Endothelial cell of umbilical vein (primary cell): ENCODE measurements at regions of chr12 and their contacts with region 1.

Region 1: DNA sequence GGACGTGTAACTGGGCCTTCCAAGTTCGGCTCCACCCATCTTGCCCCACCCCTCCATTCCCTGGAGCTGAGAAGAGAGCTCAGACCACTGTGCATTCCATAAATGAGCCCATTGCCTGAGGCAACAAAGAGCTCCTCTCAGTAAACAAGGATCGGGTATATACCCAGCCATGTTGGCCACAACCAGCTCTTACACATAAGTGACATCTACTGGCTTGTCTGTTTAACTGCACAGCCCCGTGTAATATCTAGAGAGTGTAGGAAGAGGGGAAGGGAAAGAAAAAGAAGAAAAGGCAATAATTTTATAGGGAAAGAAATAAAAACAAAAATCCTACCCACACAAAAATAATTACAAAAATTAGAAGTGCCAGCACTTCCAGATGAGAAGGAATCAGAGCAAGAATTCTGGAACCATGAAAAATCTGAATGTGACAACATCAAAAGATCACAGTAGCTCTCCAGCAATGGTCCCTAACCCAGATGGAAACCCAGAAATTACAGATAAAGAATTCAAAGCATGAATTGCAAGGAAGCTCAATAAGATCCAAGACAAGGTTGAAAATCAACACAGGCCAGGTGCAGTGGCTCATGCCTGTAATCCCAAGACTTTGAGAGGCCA is 308.1 kb downstream of the RPAP3 start:
- DNase-seq: peak; percentile 55
- H3K4me3 ChIP-seq: no peak overlapping the region
- H3K27ac ChIP-seq: no peak overlapping the region
- H3K4me1 ChIP-seq: peaks cover 12% of the 10 kb centered on the region
- H3K27me3 ChIP-seq: no peaks in the 10 kb centered on the region
- CTCF ChIP-seq: peak; percentile 58 to 59
- POLR2A ChIP-seq: no peak

Region 2: DNA sequence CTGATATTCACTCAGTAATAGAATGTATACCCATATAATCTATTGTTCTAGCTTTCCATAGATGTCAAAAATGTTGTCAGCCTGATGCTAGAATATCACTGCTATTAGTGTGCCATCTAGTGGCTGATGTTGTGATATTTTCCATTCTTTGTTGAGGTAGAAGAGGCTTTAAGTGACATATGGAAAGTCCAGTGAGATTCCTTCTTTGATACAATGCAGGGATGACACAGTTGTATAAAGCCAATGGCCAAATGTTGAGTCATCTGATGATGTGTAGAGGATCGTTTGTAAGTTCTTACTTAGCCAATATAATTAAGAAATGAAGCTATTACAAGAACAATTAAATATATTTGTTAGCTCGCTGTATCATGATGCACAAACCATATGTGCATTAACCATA is 376.5 kb before region 1 on chr12:
- CTCF ChIA-PET with region 1: interaction called, 45 read pairs
- POLR2A ChIA-PET with region 1: interaction called, 3 read pairs
- dilution Hi-C with region 1: no loop called
- intact Hi-C with region 1: no loop called
- DNase-seq: peak; percentile 91
- H3K4me3 ChIP-seq: no peak overlapping the region
- H3K27ac ChIP-seq: no peak overlapping the region
- H3K4me1 ChIP-seq: peaks cover 20% of the 10 kb centered on the region
- H3K27me3 ChIP-seq: no peaks in the 10 kb centered on the region
- CTCF ChIP-seq: peak; percentile 32 to 38
- POLR2A ChIP-seq: no peak

Region 3: GRCh38 chr12:47079468-47079980 is 318.2 kb before region 1 on chr12 and contains the starts of genes AMIGO2 and PCED1B:
- CTCF ChIA-PET with region 1: interaction called, 90 read pairs
- POLR2A ChIA-PET with region 1: no interaction called
- dilution Hi-C with region 1: no loop called
- intact Hi-C with region 1: loop called (anchors 1 kb)
- DNase-seq: peak; percentile 67
- H3K4me3 ChIP-seq: peak within 1 kb of the TSS; percentile 65 to 91 (median 78)
- H3K27ac ChIP-seq: peak within 1 kb of the TSS; percentile 97
- H3K4me1 ChIP-seq: peaks cover 13% of the 10 kb centered on the region
- H3K27me3 ChIP-seq: no peaks in the 10 kb centered on the region
- CTCF ChIP-seq: peak in 1 of 2 donors; percentile 18
- POLR2A ChIP-seq: no peak
- total RNA-seq, gene AMIGO2: 7.5 and 8.7 TPM in 2 replicates
- total RNA-seq, gene PCED1B: 1.5 and 2.6 TPM in 2 replicates

Region 4: DNA sequence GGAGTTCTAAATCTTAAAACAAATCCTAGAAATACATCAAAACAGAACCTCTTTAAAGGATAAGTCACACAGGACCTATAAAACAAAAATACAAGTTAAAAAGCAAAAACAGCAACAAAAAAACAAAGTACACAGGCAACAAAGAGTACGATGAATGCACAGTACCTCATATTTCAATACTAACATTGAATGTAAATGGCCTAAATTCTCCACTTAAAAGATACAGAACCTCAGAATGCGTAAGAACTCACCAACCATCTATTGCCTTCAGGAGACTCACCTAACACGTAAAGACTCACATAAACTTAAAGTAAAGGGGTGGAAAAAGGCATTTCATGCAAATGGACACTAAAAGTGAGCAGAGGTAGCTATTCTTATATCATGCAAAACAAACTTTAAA is 145.9 kb before region 1 on chr12:
- CTCF ChIA-PET with region 1: interaction called, 10 read pairs
- POLR2A ChIA-PET with region 1: no interaction called
- dilution Hi-C with region 1: no loop called
- intact Hi-C with region 1: no loop called
- DNase-seq: no peak
- H3K4me3 ChIP-seq: no peak overlapping the region
- H3K27ac ChIP-seq: no peak overlapping the region
- H3K4me1 ChIP-seq: peaks cover 7% of the 10 kb centered on the region
- H3K27me3 ChIP-seq: peaks cover 0 to 1% of the 10 kb centered on the region in 2 experiments
- CTCF ChIP-seq: no peak
- POLR2A ChIP-seq: no peak

Region 5: DNA sequence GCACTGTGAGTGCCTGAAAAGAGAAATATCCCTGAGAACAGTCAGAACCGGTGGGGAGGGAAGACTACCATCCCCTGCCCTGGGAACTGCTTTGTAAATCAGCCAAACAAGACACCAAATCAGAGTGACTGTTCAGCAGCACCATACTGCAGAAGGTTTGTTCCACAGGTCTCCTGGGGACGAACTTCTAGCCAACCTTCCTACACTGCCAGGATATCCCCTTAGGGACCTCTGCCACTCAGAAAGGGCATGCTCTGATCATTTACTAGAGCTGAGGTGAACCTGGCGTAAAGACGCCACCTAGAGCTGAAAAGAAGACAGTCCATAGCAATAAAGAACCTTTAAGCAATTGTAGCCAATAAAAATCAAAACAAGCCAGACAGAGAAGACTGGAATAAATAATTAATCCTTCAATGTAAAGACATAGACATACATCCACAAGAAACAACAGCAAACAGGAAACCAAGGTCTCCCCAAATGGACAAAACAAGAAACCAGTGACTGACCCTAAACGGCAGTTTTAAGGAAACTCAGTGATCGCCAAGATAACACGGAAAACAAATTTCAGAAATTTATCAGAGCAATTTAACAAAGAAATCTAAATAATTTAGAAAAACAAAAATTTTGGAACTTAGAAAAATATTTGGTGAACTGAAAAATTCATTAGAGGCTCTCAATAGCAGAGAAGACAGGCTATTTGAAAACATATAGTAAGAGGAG is 89.9 kb before region 1 on chr12:
- CTCF ChIA-PET with region 1: interaction called, 43 read pairs
- POLR2A ChIA-PET with region 1: no interaction called
- dilution Hi-C with region 1: no loop called
- intact Hi-C with region 1: loop called (anchors 1 kb)
- DNase-seq: peak; percentile 66
- H3K4me3 ChIP-seq: no peak overlapping the region
- H3K27ac ChIP-seq: no peak overlapping the region
- H3K4me1 ChIP-seq: no peaks in the 10 kb centered on the region
- H3K27me3 ChIP-seq: no peaks in the 10 kb centered on the region
- CTCF ChIP-seq: peak; percentile 47 to 57
- POLR2A ChIP-seq: no peak

Region 6: DNA sequence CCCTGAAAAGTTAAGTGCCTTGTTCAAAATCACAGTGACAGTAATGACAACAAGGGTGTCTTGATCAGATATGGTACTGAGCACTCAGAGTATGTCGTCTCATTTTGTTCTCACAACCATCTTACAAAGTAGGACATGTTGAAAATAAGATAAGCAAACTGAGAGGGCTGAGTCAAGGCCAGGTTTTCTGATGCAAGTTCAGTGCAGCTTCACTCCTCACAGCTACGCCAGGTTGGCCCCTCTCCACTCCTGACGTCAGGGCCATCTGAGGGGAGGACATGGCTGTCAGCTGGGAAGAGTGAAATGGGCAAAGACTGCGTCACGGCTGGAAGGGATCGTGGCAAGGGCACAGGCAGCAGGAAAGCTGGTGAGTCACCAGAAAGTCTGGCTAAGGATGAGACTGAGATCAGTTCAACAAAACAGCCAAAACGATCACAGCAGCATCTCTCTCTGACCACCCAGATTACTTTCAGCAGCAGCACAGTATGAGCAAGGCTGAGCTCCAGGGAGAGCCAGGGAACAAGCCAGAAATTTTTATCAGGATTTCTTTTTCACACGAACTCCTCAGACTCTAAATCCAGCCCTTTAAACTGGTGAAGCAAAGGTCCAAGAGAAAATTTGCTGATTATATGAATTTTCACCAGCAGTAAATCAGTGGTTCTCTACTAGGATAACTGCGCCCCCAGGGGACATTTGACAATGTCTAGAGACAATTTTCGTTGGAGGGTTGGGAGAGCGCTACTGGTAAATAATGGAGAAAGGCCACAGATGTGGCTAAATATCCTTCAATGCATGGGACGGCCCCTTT is 20.2 kb before region 1 on chr12:
- CTCF ChIA-PET with region 1: interaction called, 14 read pairs
- POLR2A ChIA-PET with region 1: no interaction called
- dilution Hi-C with region 1: no loop called
- intact Hi-C with region 1: loop called (anchors 2 kb)
- DNase-seq: peak; percentile 97
- H3K4me3 ChIP-seq: no peak overlapping the region
- H3K27ac ChIP-seq: peak overlapping the region; percentile 63
- H3K4me1 ChIP-seq: peaks cover 26% of the 10 kb centered on the region
- H3K27me3 ChIP-seq: no peaks in the 10 kb centered on the region
- CTCF ChIP-seq: no peak
- POLR2A ChIP-seq: no peak